Dendritic cell treated with granulocyte-macrophage colony-stimulating factor and Interleukin-4, amounts not matched to agents 40 ng/mL and 50 ng/mL, for 4 days (primary cell): ENCODE measurements at regions of chr4 and their contacts with region 1.

Region 1: DNA sequence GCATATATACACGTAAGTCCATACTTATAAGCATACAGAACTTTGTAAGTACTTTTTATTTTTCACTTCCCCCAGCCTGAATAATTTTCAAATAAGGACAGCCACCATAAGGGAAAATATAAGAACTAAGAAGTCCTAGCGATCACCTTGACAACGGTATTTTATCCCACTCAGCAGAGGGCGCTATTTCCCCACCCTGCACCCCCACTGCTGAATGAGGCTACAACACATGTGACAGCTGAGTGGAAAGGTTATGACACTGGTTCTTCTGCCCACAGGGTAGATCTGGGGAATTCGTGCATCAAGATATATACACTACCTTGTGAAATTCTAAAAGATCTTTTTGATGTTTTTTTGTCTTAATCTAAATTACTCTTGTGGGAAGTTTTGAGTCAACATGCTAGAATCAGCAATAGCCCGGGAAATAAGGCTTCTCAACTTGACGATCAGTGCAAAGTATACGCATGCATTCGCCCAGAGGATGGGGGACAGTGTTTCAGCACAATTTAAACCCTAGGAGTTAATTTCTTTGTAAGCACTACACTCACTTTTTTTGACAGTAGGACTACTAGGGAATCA is 151.5 kb downstream of the CORIN start:
- H3K4me3 Mint-ChIP-seq: no peak overlapping the region
- H3K27ac Mint-ChIP-seq: no peak overlapping the region
- H3K4me1 Mint-ChIP-seq: no peaks in the 10 kb centered on the region
- H3K27me3 Mint-ChIP-seq: peaks cover 10% of the 10 kb centered on the region

Region 2: DNA sequence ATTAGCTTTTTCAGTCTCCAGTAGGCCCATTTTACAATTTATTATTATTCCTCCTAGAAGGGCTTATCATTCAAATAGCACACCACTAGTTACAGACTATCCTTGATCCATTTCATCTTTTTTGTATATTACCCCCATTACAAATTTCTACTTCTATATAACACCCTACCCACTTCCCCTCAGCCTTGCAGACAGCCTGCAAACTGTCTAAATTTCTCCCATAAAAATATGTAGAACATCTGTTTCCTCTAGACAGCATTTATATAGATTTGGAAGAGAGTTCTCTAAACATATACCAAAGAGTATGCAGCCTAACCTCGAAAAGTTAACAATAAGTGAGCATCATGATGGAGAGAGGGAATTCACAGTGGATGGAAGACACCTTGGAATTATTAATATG is 253.6 kb before region 1 on chr4:
- intact Hi-C with region 1: no loop called
- H3K4me3 Mint-ChIP-seq: no peak overlapping the region
- H3K27ac Mint-ChIP-seq: no peak overlapping the region
- H3K4me1 Mint-ChIP-seq: no peaks in the 10 kb centered on the region
- H3K27me3 Mint-ChIP-seq: no peaks in the 10 kb centered on the region

Region 3: DNA sequence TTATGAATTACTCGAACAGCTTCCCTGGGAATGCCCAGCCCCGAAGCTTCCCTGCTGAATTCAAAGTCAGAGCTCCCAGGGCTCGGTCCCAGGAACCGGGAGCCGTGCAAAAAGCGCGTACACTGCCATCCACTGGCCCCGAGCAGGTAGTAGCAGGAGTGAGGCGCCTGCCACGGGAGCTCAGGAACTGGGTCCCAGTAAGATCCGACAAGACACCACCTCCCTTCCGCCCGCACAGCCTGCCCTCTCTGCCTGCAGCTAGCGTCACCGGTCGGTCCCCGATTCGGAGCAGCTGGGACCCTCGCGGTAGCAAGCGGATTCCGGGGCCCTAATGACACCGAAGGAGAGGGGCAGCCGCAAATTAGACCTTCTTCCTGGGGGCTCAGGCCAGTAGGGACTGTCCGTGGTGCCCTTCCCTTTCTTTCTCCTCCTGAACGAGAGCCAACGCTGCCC is 150.3 kb after region 1 on chr4:
- intact Hi-C with region 1: loop called (anchors 5 kb)
- H3K4me3 Mint-ChIP-seq: peak overlapping the region; percentile 70
- H3K27ac Mint-ChIP-seq: peak overlapping the region; percentile 17
- H3K4me1 Mint-ChIP-seq: peaks cover 37% of the 10 kb centered on the region
- H3K27me3 Mint-ChIP-seq: peaks cover 30% of the 10 kb centered on the region

Region 4: GRCh38 chr4:47933840-47934239 is 247.5 kb after region 1 on chr4:
- intact Hi-C with region 1: loop called (anchors 1 kb)
- H3K4me3 Mint-ChIP-seq: no peak overlapping the region
- H3K27ac Mint-ChIP-seq: no peak overlapping the region
- H3K4me1 Mint-ChIP-seq: peaks cover 16% of the 10 kb centered on the region
- H3K27me3 Mint-ChIP-seq: peaks cover 1% of the 10 kb centered on the region

Region 5: DNA sequence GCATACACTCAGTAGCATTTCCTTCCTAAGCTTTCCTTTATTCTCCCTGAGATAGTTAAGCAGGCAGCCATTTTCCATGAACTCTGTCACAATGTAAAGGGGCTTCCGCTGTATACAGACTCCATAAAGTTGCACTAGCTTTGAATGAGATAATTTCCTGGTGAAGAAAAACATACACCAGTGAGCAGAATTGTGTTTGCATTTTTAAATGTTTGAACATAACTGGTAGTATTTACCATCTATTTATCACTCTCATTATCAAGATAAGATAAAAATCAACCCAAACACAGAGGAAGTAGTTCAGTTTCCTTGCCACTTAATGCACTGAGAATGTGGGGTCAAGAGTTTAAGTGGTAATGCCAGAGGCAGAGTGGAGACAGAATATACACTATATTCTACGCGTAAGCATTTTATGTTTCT is 393.6 kb after region 1 on chr4:
- intact Hi-C with region 1: loop called (anchors 10 kb)
- H3K4me3 Mint-ChIP-seq: no peak overlapping the region
- H3K27ac Mint-ChIP-seq: no peak overlapping the region
- H3K4me1 Mint-ChIP-seq: no peaks in the 10 kb centered on the region
- H3K27me3 Mint-ChIP-seq: peaks cover 4% of the 10 kb centered on the region

Region 6: DNA sequence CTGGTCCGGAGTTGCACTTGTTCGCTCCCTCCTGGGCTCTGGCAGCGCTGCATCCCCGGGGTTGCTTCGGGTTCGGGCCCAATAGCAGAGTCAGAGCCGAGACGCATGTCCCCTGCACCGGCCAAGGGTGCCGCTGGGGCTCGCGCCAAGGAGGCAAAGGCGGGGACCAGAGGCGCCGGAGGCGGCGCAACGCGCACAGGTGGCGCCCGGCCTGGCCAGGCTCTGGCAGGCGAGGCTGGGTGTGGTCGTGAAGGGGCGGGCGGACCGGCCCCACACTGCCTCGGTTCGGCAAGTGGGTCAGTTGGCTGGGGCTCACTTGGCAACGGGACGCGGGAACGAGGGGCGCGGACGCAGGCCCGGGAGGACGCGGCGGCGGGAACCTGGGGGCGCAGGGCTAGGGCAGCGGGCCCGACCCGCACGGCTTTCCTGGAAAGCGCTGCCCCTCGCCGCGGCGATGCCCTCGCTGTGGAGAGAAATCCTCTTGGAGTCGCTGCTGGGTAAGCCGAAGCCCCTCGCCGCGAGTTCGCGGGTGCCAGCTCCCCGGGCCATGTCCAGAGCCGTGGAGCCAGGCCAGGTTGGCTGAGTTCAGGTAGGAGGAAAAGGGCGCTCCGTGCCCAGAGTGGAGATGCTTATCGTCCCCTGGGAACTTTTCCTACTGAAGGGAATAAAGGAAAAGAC is 1299.7 kb after region 1 on chr4 and contains the start of gene CWH43:
- intact Hi-C with region 1: no loop called
- H3K4me3 Mint-ChIP-seq: no peak within 1 kb of the TSS
- H3K27ac Mint-ChIP-seq: no peak within 1 kb of the TSS
- H3K4me1 Mint-ChIP-seq: no peaks in the 10 kb centered on the region
- H3K27me3 Mint-ChIP-seq: peaks cover 53% of the 10 kb centered on the region